ENCODE measurements at regions of chr20 and their contacts with region 1.

Region 1: GRCh38 chr20:4592316-4593148 is 129.2 kb upstream of the PRND start:
- DNase-seq: peak; percentile 30 to 56
- ATAC-seq: peak; percentile 47 to 67 (median 62)
- H3K4me3 ChIP-seq: peak overlapping the region; percentile 54
- H3K27ac ChIP-seq: no peak overlapping the region
- H3K4me1 ChIP-seq: no peaks in the 10 kb centered on the region
- H3K27me3 ChIP-seq: peaks cover 0 to 11% (median 0%) of the 10 kb centered on the region in 3 donors
- CTCF ChIP-seq: peak; percentile 81

Region 2: DNA sequence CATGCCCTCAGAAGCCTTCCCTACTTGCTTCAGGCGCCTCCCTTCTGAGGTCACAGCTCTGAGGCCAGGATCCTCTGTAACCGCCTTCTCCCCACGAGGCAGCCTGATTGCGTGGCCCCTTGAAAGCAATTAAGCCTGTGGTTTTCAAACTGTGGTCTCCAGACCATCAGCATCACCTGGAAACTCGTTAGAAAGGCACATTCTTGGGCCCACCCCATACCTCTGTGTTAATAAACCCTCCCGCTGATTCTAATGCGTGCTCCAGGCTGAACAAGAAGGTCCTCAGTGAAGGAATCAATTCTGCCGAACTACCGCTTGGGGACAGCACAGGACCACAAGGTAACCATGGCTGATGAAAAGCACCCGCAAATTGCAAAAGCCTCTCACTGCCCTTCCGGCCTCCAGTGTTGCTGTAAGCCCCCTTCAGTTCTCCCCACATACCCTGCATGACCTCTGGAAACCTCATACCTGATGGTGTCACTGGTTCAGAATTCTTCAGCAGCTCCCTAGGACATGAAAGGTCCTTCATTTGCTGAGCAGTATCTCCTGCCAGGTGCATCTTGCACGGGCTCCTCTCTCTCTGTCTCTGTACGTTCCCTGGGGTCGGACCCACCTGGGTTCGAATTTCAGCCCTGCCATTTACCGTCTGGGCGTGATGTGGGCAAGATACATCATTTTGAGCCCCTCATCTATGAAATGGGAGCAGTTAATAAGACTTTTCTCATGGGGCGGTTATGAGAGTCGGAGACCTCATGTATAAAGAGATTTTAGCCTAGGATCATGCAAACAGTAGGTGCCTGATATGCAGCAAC is 483.8 kb before region 1 on chr20:
- intact Hi-C with region 1: loop called in 1 of 2 experiments (anchors 5 kb)
- DNase-seq: peak; percentile 47 to 68
- ATAC-seq: peak; percentile 83 to 96 (median 90)
- H3K4me3 ChIP-seq: no peak overlapping the region
- H3K27ac ChIP-seq: no peak overlapping the region
- H3K4me1 ChIP-seq: peaks cover 6% of the 10 kb centered on the region
- H3K27me3 ChIP-seq: no peaks in the 10 kb centered on the region
- CTCF ChIP-seq: peak; percentile 95

Region 3: GRCh38 chr20:4244700-4245485 is 347.6 kb before region 1 on chr20:
- intact Hi-C with region 1: loop called in 1 of 2 experiments (anchors 1 kb)
- DNase-seq: no peak
- ATAC-seq: no peak
- H3K4me3 ChIP-seq: no peak overlapping the region
- H3K27ac ChIP-seq: no peak overlapping the region
- H3K4me1 ChIP-seq: no peaks in the 10 kb centered on the region
- H3K27me3 ChIP-seq: peaks cover 0 to 68% (median 21%) of the 10 kb centered on the region in 3 donors
- CTCF ChIP-seq: no peak